HepG2 (cell line): ENCODE measurements at regions of chr1 and their contacts with region 1.

Region 1: DNA sequence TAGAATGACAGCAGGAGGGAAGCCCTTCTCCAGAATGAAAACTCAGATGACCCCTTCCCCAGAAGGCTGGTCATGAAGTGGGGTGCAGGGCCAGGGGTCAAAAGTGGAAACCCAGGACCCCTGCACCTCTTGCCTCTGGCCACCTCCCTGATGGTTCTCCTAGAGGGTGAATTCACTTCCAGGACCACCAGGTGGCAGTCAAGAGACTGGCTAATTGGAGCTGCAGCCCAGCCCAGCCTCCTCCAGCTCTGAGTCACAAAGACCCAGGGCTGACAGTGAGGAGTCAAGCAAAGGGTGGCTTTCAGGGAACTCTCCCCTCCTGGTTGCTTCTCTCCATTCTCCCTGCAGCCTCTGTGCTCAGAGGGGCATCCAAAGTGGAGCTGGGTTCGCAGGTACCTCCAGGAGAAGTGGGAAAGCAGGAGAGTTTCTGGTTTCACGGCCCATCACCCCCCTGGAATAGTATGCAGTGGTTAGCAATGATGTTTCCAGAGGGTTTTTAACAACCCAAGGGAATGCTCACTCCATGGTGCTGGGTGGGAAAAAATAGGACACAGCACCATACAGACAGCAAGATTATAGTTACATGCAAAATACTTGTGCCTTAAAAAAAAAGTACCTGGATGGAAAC is 6.1 kb upstream of the EPHB2 start:
- DNase-seq: peak; percentile 72
- ATAC-seq: peak; percentile 95
- H3K4me3 ChIP-seq: no peak overlapping the region
- H3K27ac ChIP-seq: no peak overlapping the region
- H3K4me1 ChIP-seq: peaks cover 12% of the 10 kb centered on the region
- H3K27me3 ChIP-seq: peaks cover 0 to 4% of the 10 kb centered on the region in 2 experiments; a peak in 2 of 5 replicates
- CTCF ChIP-seq: peak; percentile 88
- EP300 ChIP-seq: no peak
- POLR2A ChIP-seq: no peak
- RAD21 ChIP-seq: peak; percentile 72

Region 2: GRCh38 chr1:22889213-22889827 is 184.8 kb after region 1 on chr1:
- CTCF ChIA-PET with region 1: interaction called, 15 read pairs
- POLR2A ChIA-PET with region 1: no interaction called
- in situ Hi-C with region 1: loop called (anchors 25 kb)
- intact Hi-C with region 1: no loop called
- DNase-seq: peak; percentile 34
- ATAC-seq: peak; percentile 75
- H3K4me3 ChIP-seq: no peak overlapping the region
- H3K27ac ChIP-seq: no peak overlapping the region
- H3K4me1 ChIP-seq: no peaks in the 10 kb centered on the region
- H3K27me3 ChIP-seq: no peaks in the 10 kb centered on the region
- CTCF ChIP-seq: peak; percentile 63
- EP300 ChIP-seq: no peak
- POLR2A ChIP-seq: no peak
- RAD21 ChIP-seq: no peak

Region 3: GRCh38 chr1:22969304-22969709 is 264.8 kb after region 1 on chr1:
- CTCF ChIA-PET with region 1: no interaction called
- POLR2A ChIA-PET with region 1: no interaction called
- in situ Hi-C with region 1: no loop called
- intact Hi-C with region 1: loop called (anchors 1 kb)
- DNase-seq: no peak
- ATAC-seq: peak; percentile 45; the same call in 2 of the 3 replicates
- H3K4me3 ChIP-seq: no peak overlapping the region
- H3K27ac ChIP-seq: no peak overlapping the region
- H3K4me1 ChIP-seq: peaks cover 15% of the 10 kb centered on the region
- H3K27me3 ChIP-seq: no peaks in the 10 kb centered on the region
- CTCF ChIP-seq: no peak
- EP300 ChIP-seq: no peak
- POLR2A ChIP-seq: no peak
- RAD21 ChIP-seq: no peak